ENCODE measurements at regions of chr19 and their contacts with region 1.

Region 1: GRCh38 chr19:35931161-35931873 is 4.9 kb upstream of the LRFN3 start:
- DNase-seq: peak; percentile 100
- ATAC-seq: peak; percentile 96
- H3K4me3 Mint-ChIP-seq: peak overlapping the region; percentile 67
- H3K27ac Mint-ChIP-seq: peak overlapping the region; percentile 86
- H3K4me1 Mint-ChIP-seq: peaks cover 26% of the 10 kb centered on the region
- H3K27me3 Mint-ChIP-seq: no peaks in the 10 kb centered on the region

Region 2: GRCh38 chr19:35628565-35629331 is 302.6 kb before region 1 on chr19 and contains the start of gene RBM42:
- CTCF ChIA-PET with region 1: no interaction called
- POLR2A ChIA-PET with region 1: no interaction called
- intact Hi-C with region 1: loop called in 1 of 2 experiments (anchors 1 kb)
- DNase-seq: peak; percentile 97
- ATAC-seq: peak; percentile 100
- H3K4me3 Mint-ChIP-seq: peak within 1 kb of the TSS; percentile 98
- H3K27ac Mint-ChIP-seq: peak within 1 kb of the TSS; percentile 98
- H3K4me1 Mint-ChIP-seq: peaks cover 12% of the 10 kb centered on the region
- H3K27me3 Mint-ChIP-seq: no peaks in the 10 kb centered on the region
- total RNA-seq, gene RBM42: 87.5 to 94.4 TPM

Region 3: DNA sequence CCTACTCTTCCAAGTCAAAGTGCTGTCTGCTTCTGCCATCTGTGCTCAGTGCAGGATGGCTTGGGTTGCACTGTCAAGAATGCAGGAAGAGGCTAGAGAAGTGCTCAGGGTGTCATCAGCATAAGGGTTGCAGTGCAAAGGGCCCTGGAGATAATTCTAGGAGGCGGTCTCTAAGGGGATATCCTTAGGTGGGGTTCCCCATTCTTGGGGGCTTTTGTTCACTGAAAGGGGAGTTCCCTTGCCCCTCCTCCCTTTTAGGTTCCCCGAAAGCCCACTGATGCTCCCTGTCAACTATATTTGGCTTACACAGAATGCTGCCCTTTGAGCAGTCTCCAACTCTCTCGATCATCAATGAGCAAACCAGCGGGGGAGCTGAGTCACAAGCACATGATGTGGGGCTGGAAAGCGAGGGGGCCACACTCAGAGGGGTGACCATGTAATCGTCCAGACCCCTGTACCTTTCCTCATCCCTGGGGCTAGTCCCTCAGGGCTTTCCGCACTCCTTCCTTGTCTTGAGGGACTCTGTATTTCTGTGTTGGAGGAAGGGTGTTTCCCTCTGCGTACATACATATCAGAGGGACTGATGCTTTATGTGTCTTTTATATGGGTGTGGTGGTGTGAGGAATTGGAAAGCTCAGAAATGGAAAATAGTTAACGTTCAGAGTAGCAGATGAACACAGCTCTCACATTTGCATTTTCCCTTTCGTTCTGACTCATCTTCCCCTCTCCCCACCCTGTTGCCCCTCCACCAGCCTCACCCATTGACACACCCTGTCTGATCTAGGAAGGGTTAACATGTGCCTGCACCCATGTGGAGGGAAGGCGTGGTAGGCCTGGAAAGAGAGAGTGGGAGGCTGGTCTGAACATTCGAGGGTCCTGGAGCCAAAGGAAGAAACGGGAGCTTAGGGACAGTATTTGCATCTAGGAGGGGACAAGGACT is 220.3 kb before region 1 on chr19:
- CTCF ChIA-PET with region 1: no interaction called
- POLR2A ChIA-PET with region 1: interaction called, 6 read pairs
- intact Hi-C with region 1: loop called in 1 of 2 experiments (anchors 1 kb)
- DNase-seq: peak; percentile 88
- ATAC-seq: peak; percentile 48
- H3K4me3 Mint-ChIP-seq: peak overlapping the region; percentile 56
- H3K27ac Mint-ChIP-seq: peak overlapping the region; percentile 100
- H3K4me1 Mint-ChIP-seq: peaks cover 43% of the 10 kb centered on the region
- H3K27me3 Mint-ChIP-seq: no peaks in the 10 kb centered on the region

Region 4: GRCh38 chr19:35748106-35749020 is 183.0 kb before region 1 on chr19 and contains the start of gene LIN37:
- CTCF ChIA-PET with region 1: interaction called, 7 read pairs
- POLR2A ChIA-PET with region 1: interaction called, 5 read pairs
- intact Hi-C with region 1: loop called (anchors 1 kb)
- DNase-seq: peak; percentile 99
- ATAC-seq: peak; percentile 81
- H3K4me3 Mint-ChIP-seq: peak within 1 kb of the TSS; percentile 89
- H3K27ac Mint-ChIP-seq: peak within 1 kb of the TSS; percentile 94
- H3K4me1 Mint-ChIP-seq: peaks cover 40% of the 10 kb centered on the region
- H3K27me3 Mint-ChIP-seq: no peaks in the 10 kb centered on the region
- total RNA-seq, gene LIN37: 8.4 to 12.7 TPM

Region 5: DNA sequence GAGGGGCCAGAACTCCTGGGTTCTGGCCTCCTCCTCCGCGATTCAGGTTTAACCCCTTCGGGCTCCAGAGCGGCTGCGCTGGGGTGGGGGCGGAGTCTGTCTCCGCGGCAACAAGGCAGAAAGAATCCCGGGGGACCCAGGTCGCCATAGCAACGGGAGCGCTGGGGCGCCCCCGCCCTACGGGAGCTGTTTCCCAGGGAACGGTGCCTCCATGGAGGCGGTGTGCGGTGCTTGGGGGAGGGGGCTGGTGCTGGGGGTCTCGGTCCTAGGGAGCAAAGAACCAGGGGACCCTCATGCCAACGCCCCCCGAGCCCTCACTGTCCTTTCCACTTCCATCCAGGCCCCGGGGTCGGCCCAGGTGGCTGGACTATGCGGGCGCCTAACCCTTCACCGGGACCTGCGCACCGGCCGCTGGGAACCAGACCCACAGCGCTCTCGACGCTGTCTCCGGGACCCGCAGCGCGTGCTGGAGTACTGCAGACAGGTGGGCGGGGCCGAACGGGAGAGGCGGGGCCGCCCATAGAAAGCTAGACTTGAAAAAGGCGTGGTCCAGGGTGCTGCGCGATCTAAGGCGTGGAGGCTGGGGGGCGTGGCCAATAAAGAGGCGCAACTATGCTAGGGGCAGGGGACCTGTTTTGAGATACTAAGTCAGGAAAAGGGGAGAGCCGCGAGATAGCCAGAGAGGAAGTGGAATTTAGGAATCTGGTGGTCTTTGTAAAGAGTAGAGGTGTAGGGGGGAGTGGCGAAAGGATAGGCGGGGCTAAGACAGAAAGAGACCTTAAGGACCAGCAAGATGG is 61.8 kb before region 1 on chr19:
- CTCF ChIA-PET with region 1: no interaction called
- POLR2A ChIA-PET with region 1: interaction called, 5 read pairs
- intact Hi-C with region 1: loop called in 1 of 2 experiments (anchors 1 kb)
- DNase-seq: peak; percentile 95
- ATAC-seq: peak; percentile 93
- H3K4me3 Mint-ChIP-seq: peak overlapping the region; percentile 52
- H3K27ac Mint-ChIP-seq: no peak overlapping the region
- H3K4me1 Mint-ChIP-seq: peaks cover 14% of the 10 kb centered on the region
- H3K27me3 Mint-ChIP-seq: peaks cover 37% of the 10 kb centered on the region

Region 6: DNA sequence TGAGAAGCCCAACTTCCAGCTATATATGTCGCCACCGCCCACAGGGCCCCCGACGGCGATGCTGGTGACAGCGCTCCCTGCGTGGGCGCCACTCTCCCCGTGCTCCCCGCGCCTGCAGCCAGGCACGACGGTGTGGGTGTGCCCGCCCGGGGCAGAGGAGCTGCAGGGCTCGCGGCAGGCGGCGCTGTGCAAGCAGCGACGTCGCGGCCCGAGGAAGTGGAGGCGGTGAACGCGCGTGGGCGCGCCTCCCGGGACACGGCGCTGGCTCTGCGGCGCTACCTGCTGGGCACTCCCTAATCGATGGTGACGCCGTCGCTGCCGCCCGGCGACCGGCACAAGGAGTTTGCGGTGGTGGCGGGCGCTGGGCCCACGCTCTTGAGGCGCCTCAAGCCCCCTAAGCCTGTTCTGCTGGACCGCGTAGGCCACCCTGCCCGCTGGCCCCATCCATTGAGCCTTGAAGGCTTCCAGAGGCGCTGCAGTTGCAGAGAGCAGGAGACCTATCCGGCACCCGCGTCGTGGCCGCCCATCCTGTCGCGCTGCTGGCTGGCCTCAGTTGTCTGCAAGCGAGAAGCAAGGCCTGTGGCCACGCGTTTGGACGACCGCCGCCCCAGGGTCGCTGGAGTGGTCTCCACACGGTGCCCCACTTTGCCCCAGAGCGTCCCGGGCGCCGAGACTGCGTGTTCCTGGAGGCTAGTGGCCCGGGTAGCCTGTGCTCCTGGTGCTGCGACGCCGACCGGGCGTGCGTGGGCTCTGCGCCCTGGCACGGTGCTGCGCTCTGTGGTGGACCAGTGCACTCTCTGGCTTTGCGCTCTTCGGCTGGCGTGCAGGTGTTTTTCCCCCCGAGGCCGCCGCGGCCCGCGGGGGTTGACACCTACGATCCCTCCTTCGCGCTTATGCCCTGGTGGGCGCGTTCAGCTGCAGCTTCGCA is 28.0 kb after region 1 on chr19:
- CTCF ChIA-PET with region 1: interaction called, 3 read pairs
- POLR2A ChIA-PET with region 1: no interaction called
- intact Hi-C with region 1: loop called in 1 of 2 experiments (anchors 1 kb)
- DNase-seq: peak; percentile 87
- ATAC-seq: peak; percentile 89
- H3K4me3 Mint-ChIP-seq: peak overlapping the region; percentile 19
- H3K27ac Mint-ChIP-seq: no peak overlapping the region
- H3K4me1 Mint-ChIP-seq: peaks cover 33% of the 10 kb centered on the region
- H3K27me3 Mint-ChIP-seq: peaks cover 5% of the 10 kb centered on the region